HEK293 (cell line): ENCODE measurements at regions of chr7 and their contacts with region 1.

Region 1: GRCh38 chr7:116984917-116985316 is 31.6 kb downstream of the ST7 start:
- H3K4me3 ChIP-seq: no peak overlapping the region
- H3K27ac ChIP-seq: no peak overlapping the region
- H3K4me1 ChIP-seq: no peaks in the 10 kb centered on the region
- CTCF ChIP-seq: no peak

Region 2: GRCh38 chr7:116957874-116958273 is 27.0 kb before region 1 on chr7:
- CTCF ChIA-PET with region 1: interaction called, 11 read pairs
- POLR2A ChIA-PET with region 1: no interaction called
- H3K4me3 ChIP-seq: no peak overlapping the region
- H3K27ac ChIP-seq: no peak overlapping the region
- H3K4me1 ChIP-seq: peaks cover 11% of the 10 kb centered on the region
- CTCF ChIP-seq: no peak

Region 3: DNA sequence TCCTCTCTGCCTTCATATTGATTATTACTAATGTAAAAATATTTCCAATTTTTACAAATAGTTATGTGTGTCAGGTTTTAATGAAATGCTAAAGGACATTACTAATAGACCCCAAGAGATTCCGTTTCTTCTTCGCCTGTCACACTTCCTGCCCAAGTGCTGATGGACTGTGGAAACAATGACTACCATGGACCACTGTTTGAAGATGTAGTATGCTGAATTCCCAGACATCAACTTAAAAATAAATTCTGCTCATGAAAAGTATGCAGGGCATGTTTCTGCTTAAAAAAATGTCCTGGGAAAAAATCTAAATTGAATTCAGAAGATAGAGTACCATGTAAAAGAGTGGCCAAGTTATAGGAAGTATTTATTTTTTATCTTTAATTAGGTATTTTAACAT is 20.5 kb after region 1 on chr7:
- CTCF ChIA-PET with region 1: interaction called, 16 read pairs
- POLR2A ChIA-PET with region 1: no interaction called
- H3K4me3 ChIP-seq: no peak overlapping the region
- H3K27ac ChIP-seq: no peak overlapping the region
- H3K4me1 ChIP-seq: peaks cover 7% of the 10 kb centered on the region; the same call in 1 of the 2 replicates
- CTCF ChIP-seq: no peak

Region 4: DNA sequence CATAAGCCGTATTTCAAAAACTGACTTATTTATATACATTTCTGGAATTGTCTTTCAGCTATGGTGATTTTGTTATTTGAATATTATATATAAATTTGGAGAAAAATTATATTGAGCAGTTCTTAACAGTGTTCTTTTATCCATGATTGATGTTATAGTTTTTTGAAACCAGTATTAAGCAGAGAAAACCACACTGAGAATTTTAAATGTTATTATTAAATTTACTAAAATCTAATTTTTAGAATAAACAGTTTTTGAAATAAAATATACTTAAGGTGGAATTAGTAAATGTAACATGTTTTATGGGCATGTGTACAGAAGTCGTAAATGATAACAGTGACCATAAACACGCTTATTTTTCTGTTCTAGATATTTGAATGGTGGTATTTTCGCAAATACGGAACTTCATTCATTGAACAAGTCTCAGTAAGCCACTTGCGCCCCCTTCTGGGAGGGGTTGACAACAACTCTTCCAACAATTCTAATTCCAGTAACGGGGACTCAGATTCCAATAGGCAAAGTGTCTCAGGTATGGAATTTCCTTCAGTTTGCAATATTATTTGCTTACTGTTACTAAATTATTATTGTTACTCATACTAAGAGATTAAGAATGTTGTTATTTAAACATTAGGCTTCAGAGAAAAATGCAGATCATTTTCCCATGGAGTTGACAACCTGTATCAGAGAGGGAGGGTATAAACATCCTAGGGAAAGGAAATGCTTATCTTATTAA is 134.4 kb after region 1 on chr7:
- CTCF ChIA-PET with region 1: interaction called, 64 read pairs
- POLR2A ChIA-PET with region 1: no interaction called
- H3K4me3 ChIP-seq: no peak overlapping the region
- H3K27ac ChIP-seq: no peak overlapping the region
- H3K4me1 ChIP-seq: peaks cover 11% of the 10 kb centered on the region; the same call in 1 of the 2 replicates
- CTCF ChIP-seq: peak; percentile 51; the same call in 1 of the 2 replicates